ENCODE measurements at regions of chr5 and their contacts with region 1.

Region 1: GRCh38 chr5:119267958-119268386 is 87.8 kb upstream of the TNFAIP8 start:
- DNase-seq: peak; percentile 99
- H3K4me3 Mint-ChIP-seq: peak overlapping the region; percentile 86
- H3K27ac Mint-ChIP-seq: peak overlapping the region; percentile 81
- H3K4me1 Mint-ChIP-seq: peaks cover 17% of the 10 kb centered on the region
- H3K27me3 Mint-ChIP-seq: no peaks in the 10 kb centered on the region
- CTCF ChIP-seq: peak; percentile 55

Region 2: GRCh38 chr5:118987988-118988865 is 279.7 kb before region 1 on chr5 and contains the start of gene DTWD2:
- CTCF ChIA-PET with region 1: interaction called, 10 read pairs
- POLR2A ChIA-PET with region 1: interaction called, 3 read pairs
- intact Hi-C with region 1: loop called (anchors 5 kb)
- DNase-seq: peak; percentile 96
- H3K4me3 Mint-ChIP-seq: peak within 1 kb of the TSS; percentile 82
- H3K27ac Mint-ChIP-seq: peak within 1 kb of the TSS; percentile 73
- H3K4me1 Mint-ChIP-seq: peaks cover 34% of the 10 kb centered on the region
- H3K27me3 Mint-ChIP-seq: no peaks in the 10 kb centered on the region
- CTCF ChIP-seq: peak; percentile 86
- total RNA-seq, gene DTWD2: 10.1 and 10.5 TPM in 2 replicates

Region 3: GRCh38 chr5:119187776-119188529 is 80.0 kb before region 1 on chr5:
- CTCF ChIA-PET with region 1: no interaction called
- POLR2A ChIA-PET with region 1: no interaction called
- intact Hi-C with region 1: no loop called
- DNase-seq: no peak
- H3K4me3 Mint-ChIP-seq: no peak overlapping the region
- H3K27ac Mint-ChIP-seq: no peak overlapping the region
- H3K4me1 Mint-ChIP-seq: no peaks in the 10 kb centered on the region
- H3K27me3 Mint-ChIP-seq: no peaks in the 10 kb centered on the region
- CTCF ChIP-seq: no peak

Region 4: GRCh38 chr5:119255571-119256356 is 12.2 kb before region 1 on chr5:
- CTCF ChIA-PET with region 1: interaction called, 24 read pairs
- POLR2A ChIA-PET with region 1: interaction called, 11 read pairs
- intact Hi-C with region 1: no loop called
- DNase-seq: peak; percentile 50
- H3K4me3 Mint-ChIP-seq: no peak overlapping the region
- H3K27ac Mint-ChIP-seq: no peak overlapping the region
- H3K4me1 Mint-ChIP-seq: no peaks in the 10 kb centered on the region
- H3K27me3 Mint-ChIP-seq: no peaks in the 10 kb centered on the region
- CTCF ChIP-seq: peak; percentile 12

Region 5: DNA sequence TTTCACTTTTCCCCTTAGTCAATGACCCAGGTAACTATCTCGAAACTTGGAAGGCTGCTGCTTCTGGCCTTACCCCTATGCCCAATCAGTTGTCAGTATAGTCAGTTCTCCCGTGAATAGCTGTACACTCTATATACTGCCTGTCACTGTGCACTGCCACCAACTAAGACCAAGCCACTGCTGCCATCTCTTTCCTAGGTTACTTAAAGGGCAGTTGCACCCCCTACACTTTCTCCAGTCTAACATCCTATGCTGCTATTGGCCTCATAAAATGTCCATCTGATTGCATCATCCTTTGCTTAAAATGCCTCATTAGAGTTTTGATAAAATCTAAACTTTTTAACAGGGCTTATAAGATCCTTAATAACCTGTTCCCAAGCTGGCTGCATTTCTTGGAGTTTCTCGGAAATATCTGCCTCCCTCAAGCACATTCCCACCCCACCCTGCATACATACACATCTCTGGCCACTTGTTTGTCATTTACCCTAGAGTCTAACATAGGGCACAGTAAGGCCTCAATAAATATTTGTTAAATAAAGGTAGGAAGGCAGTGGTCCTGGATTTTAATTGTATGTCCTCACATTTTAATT is 55.1 kb after region 1 on chr5:
- CTCF ChIA-PET with region 1: interaction called, 6 read pairs
- POLR2A ChIA-PET with region 1: interaction called, 41 read pairs
- intact Hi-C with region 1: loop called (anchors 1 kb)
- DNase-seq: peak; percentile 54
- H3K4me3 Mint-ChIP-seq: no peak overlapping the region
- H3K27ac Mint-ChIP-seq: peak overlapping the region; percentile 98
- H3K4me1 Mint-ChIP-seq: peaks cover 44% of the 10 kb centered on the region
- H3K27me3 Mint-ChIP-seq: no peaks in the 10 kb centered on the region
- CTCF ChIP-seq: no peak

Region 6: GRCh38 chr5:119360905-119361593 is 93.1 kb after region 1 on chr5:
- CTCF ChIA-PET with region 1: interaction called, 5 read pairs
- POLR2A ChIA-PET with region 1: interaction called, 41 read pairs
- intact Hi-C with region 1: no loop called
- DNase-seq: peak; percentile 95
- H3K4me3 Mint-ChIP-seq: peak overlapping the region; percentile 44
- H3K27ac Mint-ChIP-seq: peak overlapping the region; percentile 80
- H3K4me1 Mint-ChIP-seq: peaks cover 81% of the 10 kb centered on the region
- H3K27me3 Mint-ChIP-seq: no peaks in the 10 kb centered on the region
- CTCF ChIP-seq: no peak

Region 7: GRCh38 chr5:119452373-119453039 is 184.5 kb after region 1 on chr5 and contains the start of gene HSD17B4:
- CTCF ChIA-PET with region 1: no interaction called
- POLR2A ChIA-PET with region 1: interaction called, 11 read pairs
- intact Hi-C with region 1: no loop called
- DNase-seq: peak; percentile 95
- H3K4me3 Mint-ChIP-seq: peak within 1 kb of the TSS; percentile 87
- H3K27ac Mint-ChIP-seq: peak within 1 kb of the TSS; percentile 82
- H3K4me1 Mint-ChIP-seq: peaks cover 13% of the 10 kb centered on the region
- H3K27me3 Mint-ChIP-seq: no peaks in the 10 kb centered on the region
- CTCF ChIP-seq: no peak
- total RNA-seq, gene HSD17B4: 163 and 169 TPM in 2 replicates

Region 8: DNA sequence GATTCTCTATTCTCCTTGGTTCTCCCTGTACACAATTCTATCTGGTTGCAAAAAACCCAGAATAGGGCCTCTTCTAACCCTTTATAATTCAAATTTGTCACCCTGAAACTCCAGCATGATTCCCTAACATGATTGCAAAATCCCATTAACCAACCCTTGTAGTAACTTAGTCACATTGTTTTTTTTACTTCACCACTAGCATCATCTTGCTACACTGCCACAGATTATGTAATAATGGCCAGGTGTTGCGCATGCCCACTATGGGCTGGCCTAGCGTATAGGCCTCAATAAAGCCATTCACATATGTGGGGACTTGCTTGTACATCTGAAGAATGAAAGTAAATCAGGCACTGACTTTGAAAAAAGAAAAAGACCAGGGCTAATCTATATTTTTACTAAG is 387.1 kb after region 1 on chr5:
- CTCF ChIA-PET with region 1: no interaction called
- POLR2A ChIA-PET with region 1: no interaction called
- intact Hi-C with region 1: no loop called
- DNase-seq: peak; percentile 98
- H3K4me3 Mint-ChIP-seq: no peak overlapping the region
- H3K27ac Mint-ChIP-seq: peak overlapping the region; percentile 7
- H3K4me1 Mint-ChIP-seq: peaks cover 6% of the 10 kb centered on the region
- H3K27me3 Mint-ChIP-seq: no peaks in the 10 kb centered on the region
- CTCF ChIP-seq: no peak

Measured in MCF 10A (cell line).